ENCODE measurements at regions of chr18 and their contacts with region 1.

Region 1: DNA sequence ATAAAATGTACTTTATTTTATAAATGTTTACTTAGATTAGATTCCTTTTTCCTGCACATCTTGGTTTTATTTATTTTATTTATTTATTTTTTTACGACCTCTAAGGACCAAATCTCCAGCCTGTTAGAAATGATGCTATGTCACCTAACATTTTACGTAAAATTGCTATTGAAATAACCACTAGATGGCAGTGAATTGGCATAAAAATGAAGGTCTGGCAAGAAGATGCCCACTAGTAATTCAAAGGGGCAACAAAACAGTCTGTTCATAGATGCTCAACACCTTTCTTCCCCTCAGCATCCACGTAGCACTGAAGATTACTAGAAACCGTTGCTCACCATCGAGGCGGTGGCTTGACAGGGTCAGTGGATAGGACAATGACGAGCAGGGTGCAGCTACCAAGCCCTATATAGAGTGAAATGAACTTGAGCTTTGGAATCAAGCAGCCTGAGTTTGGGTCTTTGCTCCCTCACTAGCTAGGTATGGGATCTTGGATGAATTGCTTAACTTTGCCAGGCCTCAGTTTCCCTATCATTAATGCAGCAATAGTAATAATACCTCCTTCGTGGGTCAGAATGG is 128.7 kb upstream of the L3MBTL4 start:
- H3K4me3 ChIP-seq: no peak overlapping the region
- H3K27ac ChIP-seq: no peak overlapping the region
- H3K4me1 ChIP-seq: no peaks in the 10 kb centered on the region; the same call in 1 of the 2 replicates
- CTCF ChIP-seq: peak; percentile 52; the same call in 1 of the 2 replicates

Region 2: GRCh38 chr18:6557053-6557779 is 13.8 kb after region 1 on chr18:
- CTCF ChIA-PET with region 1: interaction called, 11 read pairs
- POLR2A ChIA-PET with region 1: no interaction called
- H3K4me3 ChIP-seq: no peak overlapping the region
- H3K27ac ChIP-seq: no peak overlapping the region
- H3K4me1 ChIP-seq: peaks cover 14% of the 10 kb centered on the region
- CTCF ChIP-seq: no peak

Region 3: DNA sequence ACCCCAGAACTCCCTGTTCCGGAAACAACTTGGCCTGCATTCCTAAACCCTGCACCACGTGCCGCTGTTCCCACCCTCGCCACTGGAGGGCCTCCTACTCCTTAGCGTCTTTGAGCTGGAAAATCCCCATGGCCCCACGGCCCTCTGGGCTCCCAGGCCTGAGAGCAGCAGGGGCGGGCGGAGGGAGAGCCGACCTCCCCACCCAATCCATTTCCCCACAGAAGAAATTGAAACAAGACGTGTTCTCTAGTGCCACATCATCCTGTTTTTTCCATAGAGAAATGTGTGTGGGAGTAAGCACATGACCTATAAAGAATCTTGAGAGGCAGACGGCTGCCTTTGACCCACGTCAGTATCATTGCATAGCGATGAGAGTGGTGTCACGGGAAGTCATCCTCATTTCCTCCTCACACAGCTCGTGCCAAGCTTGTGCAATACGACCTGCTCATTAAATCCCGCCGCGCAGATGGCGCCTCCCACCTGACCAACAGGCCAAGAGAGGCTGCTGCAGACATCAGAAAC is 495.0 kb after region 1 on chr18:
- CTCF ChIA-PET with region 1: no interaction called
- POLR2A ChIA-PET with region 1: no interaction called
- H3K4me3 ChIP-seq: peak overlapping the region; percentile 2; the same call in 1 of the 2 replicates
- H3K27ac ChIP-seq: peak overlapping the region; percentile 28; the same call in 1 of the 2 replicates
- H3K4me1 ChIP-seq: no peaks in the 10 kb centered on the region; the same call in 1 of the 2 replicates
- CTCF ChIP-seq: peak; percentile 60; the same call in 1 of the 2 replicates

Measured in HEK293 (cell line).